Ascending aorta (tissue), 2 donors: ENCODE measurements at regions of chr2 and their contacts with region 1.

Region 1: DNA sequence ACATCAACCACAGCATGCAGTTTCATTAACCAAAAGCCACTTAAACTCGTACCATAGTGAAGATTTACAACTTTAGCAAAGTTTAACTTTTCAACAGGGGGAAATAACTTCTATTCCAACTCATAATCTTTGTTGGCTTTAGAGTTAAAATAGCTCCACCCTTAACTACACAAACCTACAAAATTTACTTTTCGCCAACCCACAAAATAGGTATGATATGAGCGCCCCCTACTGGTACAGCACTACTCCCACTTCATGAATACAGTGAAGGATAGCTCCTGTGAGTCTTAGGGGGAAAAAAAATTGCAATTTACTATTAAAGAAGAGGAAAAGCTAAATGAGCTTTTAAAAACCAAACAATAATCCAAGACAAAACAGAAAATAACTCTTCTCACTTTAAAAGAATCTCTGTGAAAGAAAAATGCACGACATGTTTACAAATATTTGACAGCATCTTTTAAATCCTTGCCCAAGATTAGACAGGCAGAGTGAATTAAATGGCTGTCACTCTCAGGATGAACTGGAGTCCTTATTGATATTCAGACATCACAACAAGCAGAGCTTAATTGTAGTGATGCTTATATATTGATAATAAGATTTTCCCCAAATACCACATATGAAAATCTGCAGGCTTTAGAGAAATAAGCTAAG is 32.2 kb downstream of the TMEFF2 start:
- DNase-seq: peak in 1 of 2 donors; percentile 78
- H3K4me3 ChIP-seq: no peak overlapping the region
- H3K27ac ChIP-seq: no peak overlapping the region
- H3K4me1 ChIP-seq: no peaks in the 10 kb centered on the region
- H3K27me3 ChIP-seq: no peaks in the 10 kb centered on the region
- CTCF ChIP-seq: peak; percentile 74 to 92 (median 87)

Region 2: DNA sequence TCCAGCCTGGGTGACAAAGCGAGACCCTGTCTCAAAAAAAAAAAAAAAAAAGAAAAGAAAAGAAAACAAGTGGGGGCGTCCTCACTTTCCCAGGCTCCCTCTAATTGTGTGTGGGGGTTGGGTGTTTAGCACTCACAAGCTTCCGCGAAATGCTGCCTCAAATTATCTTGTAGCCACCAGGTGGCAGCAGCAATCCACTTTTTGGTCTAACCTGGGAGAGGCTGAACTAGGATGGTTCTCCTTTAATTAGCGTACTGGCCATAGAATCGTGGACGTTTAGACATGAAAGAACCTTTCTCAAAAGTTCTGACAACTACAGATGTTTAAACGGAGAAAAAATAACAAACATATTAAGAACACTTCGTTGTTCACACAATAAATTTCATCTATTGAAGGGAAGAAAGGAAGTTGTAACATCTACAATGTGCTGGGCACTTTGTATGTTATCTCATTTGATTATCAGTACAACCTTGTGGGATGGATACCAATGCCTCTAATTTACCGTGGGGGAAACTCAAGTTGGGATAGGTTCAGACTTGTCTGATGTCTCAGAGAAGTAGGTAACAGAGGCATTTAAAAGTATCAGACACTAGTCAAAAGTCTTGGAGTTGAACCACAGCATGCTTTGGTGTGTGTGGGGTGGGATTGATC is 607.3 kb before region 1 on chr2:
- intact Hi-C with region 1: loop called (anchors 1 kb)
- DNase-seq: peak; percentile 27 to 90
- H3K4me3 ChIP-seq: no peak overlapping the region
- H3K27ac ChIP-seq: no peak overlapping the region
- H3K4me1 ChIP-seq: peaks cover 0 to 5% of the 10 kb centered on the region in 2 donors
- H3K27me3 ChIP-seq: no peaks in the 10 kb centered on the region
- CTCF ChIP-seq: peak; percentile 46 to 73 (median 55)

Region 3: DNA sequence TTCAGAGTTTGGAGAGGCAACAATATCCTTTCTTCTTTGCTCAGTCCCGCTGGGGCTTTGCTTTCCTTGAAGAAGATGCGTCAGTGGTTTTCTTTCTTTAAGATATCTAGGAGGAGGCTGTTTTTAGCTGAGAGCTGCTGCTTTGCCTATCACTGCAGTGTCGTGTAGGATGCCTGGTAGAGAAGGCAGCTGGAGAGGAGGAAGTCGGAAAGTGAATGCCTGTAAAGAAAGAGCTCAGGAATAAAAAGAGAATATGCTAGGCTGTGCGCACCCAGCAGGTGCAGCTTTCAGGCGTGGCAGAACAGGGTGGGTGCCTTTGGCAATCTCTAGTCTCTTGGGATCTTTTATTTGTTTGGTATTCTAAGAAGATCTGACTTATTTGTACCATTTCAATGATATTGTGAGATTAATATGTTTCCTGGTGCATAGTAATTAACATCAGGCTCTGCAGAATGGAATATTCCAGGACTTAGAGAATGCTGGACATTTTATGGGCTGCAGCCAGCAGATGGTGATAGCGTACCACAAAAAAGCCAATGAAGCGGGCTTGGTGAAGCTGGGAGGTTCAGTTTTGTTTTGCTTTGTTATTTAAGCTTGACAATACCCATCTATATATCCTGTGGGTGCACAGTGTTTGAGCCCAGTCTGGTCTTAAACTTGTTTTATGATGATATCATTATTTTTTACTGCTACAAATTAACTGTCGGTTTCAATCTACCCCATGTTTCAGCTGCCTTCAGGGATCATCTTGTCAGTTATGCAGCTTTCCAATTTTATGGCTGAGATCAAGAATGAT is 350.5 kb before region 1 on chr2:
- intact Hi-C with region 1: loop called (anchors 1 kb)
- DNase-seq: peak in 1 of 2 donors; percentile 67
- H3K4me3 ChIP-seq: no peak overlapping the region
- H3K27ac ChIP-seq: no peak overlapping the region
- H3K4me1 ChIP-seq: no peaks in the 10 kb centered on the region
- H3K27me3 ChIP-seq: no peaks in the 10 kb centered on the region
- CTCF ChIP-seq: peak; percentile 57 to 80 (median 73)

Region 4: GRCh38 chr2:191910518-191910917 is 252.0 kb before region 1 on chr2:
- intact Hi-C with region 1: no loop called
- DNase-seq: no peak
- H3K4me3 ChIP-seq: no peak overlapping the region
- H3K27ac ChIP-seq: no peak overlapping the region
- H3K4me1 ChIP-seq: no peaks in the 10 kb centered on the region
- H3K27me3 ChIP-seq: no peaks in the 10 kb centered on the region
- CTCF ChIP-seq: no peak

Region 5: DNA sequence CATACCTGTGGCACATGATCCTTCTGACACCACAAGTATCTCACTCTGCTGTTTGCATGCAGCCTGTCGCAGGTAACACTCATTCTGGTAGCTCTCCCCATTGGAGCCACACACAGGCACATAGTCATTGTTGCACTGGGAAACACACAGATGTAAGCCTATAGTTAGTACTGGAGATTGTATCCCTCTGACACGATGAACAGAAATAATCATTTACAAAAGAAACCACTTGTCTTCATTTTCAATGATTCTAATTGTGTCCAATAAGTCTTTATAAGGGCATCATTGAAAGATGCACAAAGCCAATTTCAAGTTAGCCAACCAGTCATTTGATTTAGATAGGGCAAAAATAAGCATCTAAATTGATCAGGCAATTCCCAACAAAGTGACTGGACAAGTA is 21.8 kb after region 1 on chr2:
- intact Hi-C with region 1: no loop called
- DNase-seq: no peak
- H3K4me3 ChIP-seq: no peak overlapping the region
- H3K27ac ChIP-seq: no peak overlapping the region
- H3K4me1 ChIP-seq: no peaks in the 10 kb centered on the region
- H3K27me3 ChIP-seq: no peaks in the 10 kb centered on the region
- CTCF ChIP-seq: no peak